ENCODE measurements at regions of chr16 and their contacts with region 1.

Region 1: DNA sequence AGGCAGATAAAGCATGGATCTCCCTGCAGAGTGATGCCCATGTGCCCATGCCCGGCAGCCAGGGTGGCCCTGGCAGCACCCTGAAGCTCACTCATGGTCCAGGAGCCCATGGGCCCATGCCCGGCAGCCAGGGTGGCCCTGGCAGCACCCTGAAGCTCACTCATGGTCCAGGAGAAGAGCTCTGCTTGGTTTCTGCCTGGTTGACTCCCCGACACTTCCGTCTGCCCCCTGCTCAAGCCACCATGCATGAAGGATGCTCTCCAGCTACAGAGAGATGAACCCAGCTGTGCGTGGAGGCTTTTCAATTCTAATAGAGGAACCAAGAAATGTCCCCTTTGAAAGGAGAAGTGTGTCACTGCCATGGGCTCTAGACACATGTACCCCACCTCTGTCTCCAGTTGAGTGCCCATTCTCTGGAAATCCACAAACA is 8.7 kb downstream of the CCL17 start:
- DNase-seq: no peak
- H3K4me3 Mint-ChIP-seq: no peak overlapping the region
- H3K27ac Mint-ChIP-seq: no peak overlapping the region
- H3K4me1 Mint-ChIP-seq: peaks cover 10% of the 10 kb centered on the region
- H3K27me3 Mint-ChIP-seq: no peaks in the 10 kb centered on the region

Region 2: GRCh38 chr16:57401943-57402640 is 11.2 kb before region 1 on chr16:
- CTCF ChIA-PET with region 1: interaction called, 11 read pairs
- POLR2A ChIA-PET with region 1: no interaction called
- DNase-seq: no peak
- H3K4me3 Mint-ChIP-seq: no peak overlapping the region
- H3K27ac Mint-ChIP-seq: no peak overlapping the region
- H3K4me1 Mint-ChIP-seq: no peaks in the 10 kb centered on the region
- H3K27me3 Mint-ChIP-seq: no peaks in the 10 kb centered on the region

Region 3: GRCh38 chr16:57432989-57433388 is 19.7 kb after region 1 on chr16:
- CTCF ChIA-PET with region 1: interaction called, 14 read pairs
- POLR2A ChIA-PET with region 1: no interaction called
- DNase-seq: no peak
- H3K4me3 Mint-ChIP-seq: no peak overlapping the region
- H3K27ac Mint-ChIP-seq: peak overlapping the region; percentile 31
- H3K4me1 Mint-ChIP-seq: peaks cover 17% of the 10 kb centered on the region
- H3K27me3 Mint-ChIP-seq: no peaks in the 10 kb centered on the region

Measured in activated CD4-positive, alpha-beta T cell treated with anti-CD3 and anti-CD28 coated beads, Interleukin-2, amount 10 ng/mL, durations not matched to agents 7 days and 5 days (primary cell).